Naive thymus-derived CD4-positive, alpha-beta T cell (primary cell): ENCODE measurements at regions of chr5 and their contacts with region 1.

Region 1: GRCh38 chr5:56161927-56162326 is 71.2 kb downstream of the ANKRD55 start:
- DNase-seq: no peak
- ATAC-seq: no peak
- H3K4me3 ChIP-seq: no peak overlapping the region
- H3K4me3 Mint-ChIP-seq: peak overlapping the region in 5 of 10 donors; percentile 38 to 96 (median 93)
- H3K27ac ChIP-seq: peak overlapping the region; percentile 61
- H3K27ac Mint-ChIP-seq: peak overlapping the region; percentile 24 to 98 (median 95)
- H3K4me1 ChIP-seq: peaks cover 0 to 45% of the 10 kb centered on the region in 2 donors
- H3K4me1 Mint-ChIP-seq: peaks cover 42 to 93% (median 79%) of the 10 kb centered on the region in 7 donors
- H3K27me3 ChIP-seq: peaks cover 0 to 2% of the 10 kb centered on the region in 2 donors
- H3K27me3 Mint-ChIP-seq: peaks cover 0 to 2% (median 0%) of the 10 kb centered on the region in 5 donors

Region 2: DNA sequence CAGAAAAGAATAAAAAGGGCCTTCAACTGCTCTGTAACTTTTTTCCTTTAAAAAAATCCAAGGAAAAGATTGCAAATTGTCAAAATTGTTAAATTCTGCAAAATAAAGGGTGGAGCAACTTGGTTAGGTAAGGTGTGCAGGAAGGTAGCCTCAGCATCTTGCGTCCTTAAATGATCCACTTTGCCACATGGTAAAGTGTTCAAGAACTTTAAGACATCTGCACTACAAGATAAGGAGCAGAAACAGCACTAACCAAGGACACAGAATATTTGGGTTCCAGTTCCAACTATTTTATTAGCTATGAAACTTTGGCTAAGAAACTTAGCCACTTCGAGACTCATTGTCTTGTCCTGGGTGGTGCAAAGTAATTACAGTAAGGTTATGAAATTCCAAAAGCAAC is 17.5 kb after region 1 on chr5:
- CTCF ChIA-PET with region 1: no interaction called
- POLR2A ChIA-PET with region 1: interaction called, 5 read pairs
- intact Hi-C with region 1: loop called in 1 of 2 experiments (anchors 2 kb)
- DNase-seq: no peak
- ATAC-seq: no peak
- H3K4me3 ChIP-seq: no peak overlapping the region
- H3K4me3 Mint-ChIP-seq: no peak overlapping the region
- H3K27ac ChIP-seq: no peak overlapping the region
- H3K27ac Mint-ChIP-seq: no peak overlapping the region
- H3K4me1 ChIP-seq: no peaks in the 10 kb centered on the region
- H3K4me1 Mint-ChIP-seq: peaks cover 4 to 21% (median 9%) of the 10 kb centered on the region in 7 donors
- H3K27me3 ChIP-seq: no peaks in the 10 kb centered on the region
- H3K27me3 Mint-ChIP-seq: peaks cover 0 to 12% (median 0%) of the 10 kb centered on the region in 5 donors

Region 3: DNA sequence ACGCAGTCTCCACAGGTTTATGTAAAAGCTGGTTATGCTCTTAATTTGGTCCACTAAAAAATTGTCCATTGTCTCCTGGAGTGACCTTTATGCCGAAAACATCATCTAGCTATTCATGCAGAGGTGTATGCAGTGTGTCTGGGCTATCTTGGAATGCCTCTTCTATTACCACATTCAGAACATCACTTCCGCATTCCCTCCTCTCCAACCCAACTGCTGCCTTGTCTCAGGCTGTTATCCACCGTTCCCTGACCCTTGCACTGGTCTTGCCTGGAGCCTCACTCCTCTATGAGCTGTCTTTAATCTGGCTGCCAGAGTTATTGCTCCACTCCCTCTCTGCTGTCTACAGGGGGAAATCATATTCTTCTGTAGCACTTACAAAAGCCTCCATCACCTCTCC is 285.3 kb after region 1 on chr5:
- CTCF ChIA-PET with region 1: no interaction called
- POLR2A ChIA-PET with region 1: no interaction called
- intact Hi-C with region 1: no loop called
- DNase-seq: no peak
- ATAC-seq: no peak
- H3K4me3 ChIP-seq: no peak overlapping the region
- H3K4me3 Mint-ChIP-seq: no peak overlapping the region
- H3K27ac ChIP-seq: no peak overlapping the region
- H3K27ac Mint-ChIP-seq: no peak overlapping the region
- H3K4me1 ChIP-seq: no peaks in the 10 kb centered on the region
- H3K4me1 Mint-ChIP-seq: peaks cover 0 to 5% (median 0%) of the 10 kb centered on the region in 7 donors
- H3K27me3 ChIP-seq: no peaks in the 10 kb centered on the region
- H3K27me3 Mint-ChIP-seq: peaks cover 0 to 3% (median 0%) of the 10 kb centered on the region in 5 donors

Region 4: DNA sequence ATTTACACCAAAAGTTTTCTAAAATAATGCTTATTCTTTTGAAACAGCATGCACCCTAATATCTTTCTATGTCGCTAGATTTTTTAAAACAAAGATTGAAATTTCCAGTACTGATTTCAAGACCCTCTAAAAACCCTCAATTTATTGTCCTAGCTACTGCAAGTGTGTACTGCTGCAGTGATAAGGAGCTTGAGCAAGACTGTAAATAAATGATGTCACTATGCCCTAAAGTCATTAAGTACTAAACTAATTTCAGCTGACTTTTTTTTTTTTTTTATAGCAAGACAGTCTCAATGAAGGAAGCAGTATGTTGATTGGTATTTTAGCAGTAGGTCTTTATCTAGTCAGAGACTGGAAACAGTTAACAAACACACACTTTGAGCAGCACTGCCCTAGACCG is 802.2 kb after region 1 on chr5:
- CTCF ChIA-PET with region 1: no interaction called
- POLR2A ChIA-PET with region 1: no interaction called
- intact Hi-C with region 1: no loop called
- DNase-seq: no peak
- ATAC-seq: no peak
- H3K4me3 ChIP-seq: no peak overlapping the region
- H3K4me3 Mint-ChIP-seq: no peak overlapping the region
- H3K27ac ChIP-seq: no peak overlapping the region
- H3K27ac Mint-ChIP-seq: no peak overlapping the region
- H3K4me1 ChIP-seq: no peaks in the 10 kb centered on the region
- H3K4me1 Mint-ChIP-seq: no peaks in the 10 kb centered on the region
- H3K27me3 ChIP-seq: peaks cover 0 to 3% of the 10 kb centered on the region in 2 donors
- H3K27me3 Mint-ChIP-seq: peaks cover 17 to 69% (median 40%) of the 10 kb centered on the region in 5 donors